ENCODE measurements at regions of chr3 and their contacts with region 1.

Region 1: GRCh38 chr3:66822186-66823008 is 175.7 kb upstream of the KBTBD8 start:
- DNase-seq: peak; percentile 60
- H3K4me3 ChIP-seq: no peak overlapping the region
- H3K27ac ChIP-seq: no peak overlapping the region
- H3K27me3 ChIP-seq: no peaks in the 10 kb centered on the region
- CTCF ChIP-seq: peak; percentile 91

Region 2: GRCh38 chr3:66253790-66254620 is 568.4 kb before region 1 on chr3:
- in situ Hi-C with region 1: loop called (anchors 25 kb)
- DNase-seq: no peak
- H3K4me3 ChIP-seq: no peak overlapping the region
- H3K27ac ChIP-seq: no peak overlapping the region
- H3K27me3 ChIP-seq: no peaks in the 10 kb centered on the region
- CTCF ChIP-seq: peak; percentile 47